ENCODE measurements at regions of chr11 and their contacts with region 1.

Region 1: GRCh38 chr11:75142714-75143419 is 8.0 kb upstream of the SLCO2B1 start:
- DNase-seq: peak; percentile 84
- ATAC-seq: peak; percentile 86
- H3K4me3 ChIP-seq: peak overlapping the region in 1 of 2 experiments; percentile 16; a peak in 1 of 4 replicates
- H3K27ac ChIP-seq: peak overlapping the region; percentile 53
- H3K4me1 ChIP-seq: peaks cover 10 to 28% of the 10 kb centered on the region in 2 experiments
- H3K27me3 ChIP-seq: no peaks in the 10 kb centered on the region
- CTCF ChIP-seq: no peak
- POLR2A ChIP-seq: peak; percentile 46
- RAD21 ChIP-seq: no peak

Region 2: DNA sequence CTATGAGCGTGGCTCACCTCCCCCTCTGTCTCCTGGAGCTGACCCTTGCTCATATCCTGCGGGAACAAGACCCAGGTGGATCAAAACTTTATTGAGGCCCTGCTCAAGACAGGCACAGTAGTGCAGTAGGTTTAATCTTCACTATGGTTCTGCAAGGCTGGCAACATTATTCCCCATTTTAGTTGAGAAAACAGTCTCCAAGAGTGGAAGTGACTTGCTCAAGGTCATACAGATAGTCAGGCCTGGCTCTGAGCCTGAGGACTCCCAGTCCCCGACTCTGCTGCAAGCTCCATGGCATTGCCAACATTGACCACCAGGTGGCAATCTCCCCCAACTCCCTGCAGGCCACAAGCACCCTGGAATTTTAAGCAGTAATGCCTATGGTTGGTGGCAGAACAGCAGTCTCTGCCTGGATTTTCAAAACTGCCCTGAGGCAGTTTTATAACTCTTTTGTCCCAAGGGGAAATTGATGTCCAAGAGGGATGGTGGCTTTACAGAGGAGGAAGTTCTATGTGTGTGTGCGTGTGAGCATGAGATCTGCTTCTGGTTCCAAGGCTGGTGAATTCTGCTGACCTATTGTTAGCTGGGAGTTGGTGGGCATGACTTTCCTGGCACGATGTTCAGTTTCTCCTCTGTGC is 120.0 kb before region 1 on chr11:
- CTCF ChIA-PET with region 1: interaction called, 30 read pairs
- POLR2A ChIA-PET with region 1: no interaction called
- RAD21 ChIA-PET with region 1: interaction called, 4 to 6 read pairs
- intact Hi-C with region 1: loop called (anchors 1 kb)
- DNase-seq: peak; percentile 60
- ATAC-seq: peak; percentile 99
- H3K4me3 ChIP-seq: no peak overlapping the region
- H3K27ac ChIP-seq: no peak overlapping the region
- H3K4me1 ChIP-seq: no peaks in the 10 kb centered on the region
- H3K27me3 ChIP-seq: no peaks in the 10 kb centered on the region
- CTCF ChIP-seq: peak; percentile 95 to 98 (median 98)
- POLR2A ChIP-seq: no peak
- RAD21 ChIP-seq: peak; percentile 95

Region 3: DNA sequence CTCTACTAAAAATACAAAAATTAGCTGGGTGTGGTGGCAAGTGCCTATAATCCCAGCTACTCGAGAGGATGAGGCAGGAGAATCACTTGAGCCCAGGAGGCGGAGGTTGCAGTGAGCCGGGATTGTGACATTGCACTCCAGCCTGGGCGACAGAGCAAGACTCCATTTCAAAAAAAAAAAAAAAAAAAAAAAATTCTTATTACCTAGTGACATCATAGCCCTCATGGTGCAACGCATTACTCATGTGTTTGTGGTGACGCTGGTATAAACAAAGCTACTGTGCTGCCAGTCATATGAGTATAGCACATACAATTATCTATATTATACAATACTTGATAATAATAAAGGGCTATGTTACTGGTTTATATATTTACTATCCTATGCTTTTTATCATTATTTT is 87.4 kb before region 1 on chr11:
- CTCF ChIA-PET with region 1: no interaction called
- POLR2A ChIA-PET with region 1: no interaction called
- RAD21 ChIA-PET with region 1: no interaction called
- intact Hi-C with region 1: no loop called
- DNase-seq: no peak
- ATAC-seq: no peak
- H3K4me3 ChIP-seq: no peak overlapping the region
- H3K27ac ChIP-seq: no peak overlapping the region
- H3K4me1 ChIP-seq: no peaks in the 10 kb centered on the region
- H3K27me3 ChIP-seq: no peaks in the 10 kb centered on the region
- CTCF ChIP-seq: no peak
- POLR2A ChIP-seq: no peak
- RAD21 ChIP-seq: no peak

Region 4: DNA sequence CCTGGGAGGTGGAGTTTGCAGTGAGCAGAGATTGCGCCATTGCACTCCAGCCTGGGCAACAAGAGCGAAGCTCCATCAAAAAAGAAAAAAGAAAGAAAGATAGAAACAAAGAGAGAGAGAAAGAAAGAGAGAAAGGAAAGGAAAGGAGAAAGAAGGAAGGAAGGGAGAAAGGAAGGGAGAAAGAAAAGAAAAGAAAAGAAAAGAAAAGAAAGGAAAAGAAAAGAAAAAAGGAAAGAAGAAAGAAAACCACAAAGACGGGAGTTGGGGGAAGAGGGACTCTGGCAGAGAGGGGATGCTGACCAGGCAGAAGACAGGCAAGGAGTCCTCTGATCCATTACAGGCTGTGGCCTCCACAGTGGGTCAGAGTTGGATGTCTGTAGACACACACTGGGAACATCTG is 10.8 kb before region 1 on chr11:
- CTCF ChIA-PET with region 1: interaction called, 15 read pairs
- POLR2A ChIA-PET with region 1: no interaction called
- RAD21 ChIA-PET with region 1: no interaction called
- intact Hi-C with region 1: no loop called
- DNase-seq: no peak
- ATAC-seq: no peak
- H3K4me3 ChIP-seq: no peak overlapping the region
- H3K27ac ChIP-seq: no peak overlapping the region
- H3K4me1 ChIP-seq: no peaks in the 10 kb centered on the region
- H3K27me3 ChIP-seq: no peaks in the 10 kb centered on the region
- CTCF ChIP-seq: no peak
- POLR2A ChIP-seq: no peak
- RAD21 ChIP-seq: no peak

Region 5: DNA sequence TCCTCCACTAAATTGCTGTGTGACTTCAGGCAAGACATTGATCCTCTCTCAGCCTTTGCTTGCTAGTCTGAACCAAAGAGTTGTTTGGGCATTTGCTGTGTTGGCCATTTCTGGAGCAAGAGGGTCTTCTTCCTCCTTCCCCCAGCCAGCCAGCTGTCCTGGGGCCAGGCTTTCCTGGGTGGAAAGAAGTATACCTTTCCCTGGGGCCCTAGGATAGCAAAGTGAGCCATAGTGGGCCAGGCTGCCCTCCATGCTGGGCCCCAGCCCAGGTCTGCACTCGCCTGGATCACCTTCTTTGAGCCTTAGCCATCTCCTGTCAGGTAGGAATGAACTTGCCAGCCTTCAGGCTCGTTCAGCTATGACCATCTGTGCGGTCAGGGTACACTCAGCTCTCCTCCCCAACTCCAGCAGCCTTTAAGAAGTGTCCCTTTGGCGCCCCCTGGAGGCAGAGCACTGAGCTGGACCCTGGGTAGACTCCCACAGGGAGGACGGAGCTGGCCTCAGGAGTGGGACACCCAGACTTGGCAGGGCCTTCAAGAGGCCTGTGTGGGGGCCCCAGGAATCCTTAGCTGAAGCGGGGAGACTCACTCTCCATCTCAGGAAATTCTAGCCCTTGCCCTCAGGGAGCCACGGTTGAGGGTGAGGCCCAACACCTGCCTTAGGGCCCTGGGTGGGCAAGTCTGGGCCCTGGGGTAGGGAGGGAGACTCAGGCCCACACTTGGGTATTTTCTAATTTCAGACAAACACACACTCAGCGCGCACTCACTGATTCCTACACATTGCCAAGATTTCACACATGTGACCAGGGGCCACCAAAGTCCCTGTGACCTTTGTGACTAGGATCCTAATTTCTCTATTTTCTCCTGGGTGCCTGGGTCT is 62.1 kb after region 1 on chr11:
- CTCF ChIA-PET with region 1: interaction called, 255 read pairs
- POLR2A ChIA-PET with region 1: interaction called, 8 read pairs
- RAD21 ChIA-PET with region 1: interaction called, 21 to 24 read pairs
- intact Hi-C with region 1: loop called (anchors 1 kb)
- DNase-seq: peak; percentile 64
- ATAC-seq: peak; percentile 100
- H3K4me3 ChIP-seq: no peak overlapping the region
- H3K27ac ChIP-seq: no peak overlapping the region
- H3K4me1 ChIP-seq: no peaks in the 10 kb centered on the region
- H3K27me3 ChIP-seq: peaks cover 30% of the 10 kb centered on the region
- CTCF ChIP-seq: peak; percentile 94 to 97 (median 94)
- POLR2A ChIP-seq: no peak
- RAD21 ChIP-seq: peak; percentile 92

Region 6: DNA sequence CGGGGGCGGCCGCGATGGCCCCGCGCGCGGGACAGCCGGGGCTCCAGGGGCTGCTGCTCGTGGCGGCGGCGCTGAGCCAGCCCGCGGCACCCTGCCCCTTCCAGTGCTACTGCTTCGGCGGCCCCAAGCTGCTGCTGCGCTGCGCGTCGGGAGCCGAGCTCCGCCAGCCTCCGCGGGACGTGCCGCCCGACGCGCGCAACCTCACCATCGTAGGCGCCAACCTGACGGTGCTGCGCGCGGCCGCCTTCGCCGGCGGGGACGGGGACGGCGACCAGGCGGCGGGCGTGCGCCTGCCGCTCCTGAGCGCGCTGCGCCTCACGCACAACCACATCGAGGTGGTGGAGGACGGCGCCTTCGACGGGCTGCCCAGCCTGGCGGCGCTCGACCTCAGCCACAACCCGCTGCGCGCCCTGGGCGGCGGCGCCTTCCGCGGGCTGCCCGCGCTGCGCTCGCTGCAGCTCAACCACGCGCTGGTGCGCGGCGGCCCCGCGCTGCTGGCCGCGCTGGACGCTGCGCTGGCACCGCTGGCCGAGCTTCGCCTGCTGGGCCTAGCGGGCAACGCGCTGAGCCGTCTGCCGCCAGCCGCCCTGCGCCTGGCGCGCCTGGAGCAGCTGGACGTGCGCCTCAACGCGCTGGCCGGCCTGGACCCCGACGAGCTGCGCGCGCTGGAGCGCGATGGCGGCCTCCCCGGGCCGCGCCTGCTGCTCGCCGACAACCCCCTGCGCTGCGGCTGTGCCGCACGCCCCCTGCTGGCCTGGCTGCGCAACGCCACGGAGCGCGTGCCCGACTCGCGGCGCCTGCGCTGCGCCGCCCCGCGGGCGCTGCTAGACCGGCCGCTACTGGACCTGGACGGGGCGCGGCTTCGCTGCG is 98.4 kb after region 1 on chr11:
- CTCF ChIA-PET with region 1: interaction called, 160 read pairs
- POLR2A ChIA-PET with region 1: no interaction called
- RAD21 ChIA-PET with region 1: interaction called in 1 of 2 experiments, 5 read pairs
- intact Hi-C with region 1: loop called (anchors 2 kb)
- DNase-seq: peak; percentile 54
- ATAC-seq: peak; percentile 91
- H3K4me3 ChIP-seq: peak overlapping the region; percentile 37 to 56
- H3K27ac ChIP-seq: peak overlapping the region; percentile 64; the same call in 1 of the 2 replicates
- H3K4me1 ChIP-seq: peaks cover 6 to 16% of the 10 kb centered on the region in 2 experiments; a peak in 3 of 4 replicates
- H3K27me3 ChIP-seq: no peaks in the 10 kb centered on the region
- CTCF ChIP-seq: peak; percentile 66 to 86 (median 70)
- POLR2A ChIP-seq: no peak
- RAD21 ChIP-seq: no peak; the same call in none of the 2 replicates

Measured in HCT116 (cell line).